ENCODE measurements at regions of chr7 and their contacts with region 1.

Region 1: DNA sequence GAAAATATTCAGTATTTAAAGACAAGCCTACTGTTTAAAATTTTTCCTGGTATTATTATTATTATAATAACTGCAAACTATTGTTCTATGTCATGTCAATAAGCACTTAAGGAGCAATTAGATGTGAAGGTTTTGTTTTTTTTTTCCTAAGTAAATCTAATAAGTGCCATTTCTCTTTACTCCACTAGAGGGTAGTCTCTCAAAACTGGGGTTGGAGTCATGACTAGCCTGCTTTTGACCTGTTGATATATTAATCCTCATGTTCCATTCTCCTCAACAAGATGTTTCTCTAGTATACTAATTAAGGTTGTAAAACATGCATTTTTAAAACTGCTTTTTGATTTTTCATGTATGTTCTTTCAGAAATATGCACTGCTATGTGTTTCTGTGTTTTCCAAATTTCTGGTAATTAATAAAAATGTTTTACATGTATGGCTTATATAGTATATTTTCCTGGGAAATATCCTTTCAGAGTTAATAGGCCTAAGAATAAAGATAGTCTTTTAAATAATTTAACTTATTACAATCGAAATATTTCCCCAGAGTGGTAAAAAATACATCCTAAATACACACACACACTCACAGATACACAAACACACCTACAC is 1.0 kb upstream of the LRRN3 start:
- DNase-seq: no peak
- H3K4me3 Mint-ChIP-seq: peak overlapping the region; percentile 93
- H3K27ac Mint-ChIP-seq: no peak overlapping the region
- H3K4me1 Mint-ChIP-seq: peaks cover 85% of the 10 kb centered on the region
- H3K27me3 Mint-ChIP-seq: no peaks in the 10 kb centered on the region

Region 2: GRCh38 chr7:110432061-110432553 is 657.8 kb before region 1 on chr7:
- intact Hi-C with region 1: no loop called
- DNase-seq: no peak
- H3K4me3 Mint-ChIP-seq: no peak overlapping the region
- H3K27ac Mint-ChIP-seq: no peak overlapping the region
- H3K4me1 Mint-ChIP-seq: no peaks in the 10 kb centered on the region
- H3K27me3 Mint-ChIP-seq: peaks cover 2% of the 10 kb centered on the region

Region 3: GRCh38 chr7:110801502-110801901 is 288.4 kb before region 1 on chr7:
- intact Hi-C with region 1: loop called (anchors 5 kb)
- DNase-seq: no peak
- H3K4me3 Mint-ChIP-seq: no peak overlapping the region
- H3K27ac Mint-ChIP-seq: no peak overlapping the region
- H3K4me1 Mint-ChIP-seq: peaks cover 10% of the 10 kb centered on the region
- H3K27me3 Mint-ChIP-seq: peaks cover 3% of the 10 kb centered on the region

Region 4: DNA sequence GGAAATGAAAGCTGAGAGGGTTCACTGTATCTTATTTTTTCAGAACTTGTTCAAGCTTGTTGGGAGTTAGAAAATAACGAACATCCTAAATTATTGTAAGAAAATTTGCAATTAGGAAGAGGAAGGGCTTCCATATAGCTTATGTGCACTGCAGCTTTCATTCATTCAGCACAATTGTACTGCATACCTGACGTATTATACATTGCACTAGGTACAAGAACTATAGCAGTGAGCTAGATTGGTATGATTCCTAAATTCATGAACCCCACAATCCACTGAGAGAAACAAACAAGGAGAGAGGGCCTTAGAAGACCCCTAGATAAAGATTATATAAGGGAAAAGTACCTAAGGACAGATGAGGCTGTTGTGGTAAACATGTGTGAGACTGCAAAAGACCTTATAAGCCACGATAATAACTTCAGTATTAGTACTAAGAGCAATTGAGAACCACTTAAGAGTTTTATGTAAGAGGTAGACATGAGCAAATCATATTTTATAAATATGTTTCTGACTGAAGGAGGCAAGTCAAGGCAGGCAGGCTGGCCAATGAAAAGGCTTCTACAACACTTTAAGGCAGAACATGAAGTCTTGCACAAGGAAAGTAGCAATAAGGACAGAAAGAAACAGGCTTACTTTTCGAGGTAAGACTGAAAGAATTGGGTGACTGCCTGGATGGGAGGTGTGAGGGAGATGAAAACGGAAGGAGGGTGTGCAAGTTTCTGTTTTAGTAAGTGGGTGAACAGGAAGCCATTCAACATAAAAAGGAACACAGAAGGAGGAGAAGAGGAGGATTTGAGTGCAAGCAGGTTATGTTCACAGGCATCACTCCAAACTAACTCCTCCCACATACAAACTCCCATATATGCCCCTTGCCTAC is 76.9 kb before region 1 on chr7:
- intact Hi-C with region 1: loop called (anchors 1 kb)
- DNase-seq: peak; percentile 53
- H3K4me3 Mint-ChIP-seq: peak overlapping the region; percentile 80
- H3K27ac Mint-ChIP-seq: peak overlapping the region; percentile 86
- H3K4me1 Mint-ChIP-seq: peaks cover 72% of the 10 kb centered on the region
- H3K27me3 Mint-ChIP-seq: no peaks in the 10 kb centered on the region

Region 5: GRCh38 chr7:111138196-111138569 is 48.3 kb after region 1 on chr7:
- intact Hi-C with region 1: loop called (anchors 1 kb)
- DNase-seq: peak; percentile 61
- H3K4me3 Mint-ChIP-seq: peak overlapping the region; percentile 53
- H3K27ac Mint-ChIP-seq: peak overlapping the region; percentile 96
- H3K4me1 Mint-ChIP-seq: peaks cover 35% of the 10 kb centered on the region
- H3K27me3 Mint-ChIP-seq: peaks cover 4% of the 10 kb centered on the region

Region 6: GRCh38 chr7:111486472-111487142 is 396.7 kb after region 1 on chr7:
- intact Hi-C with region 1: loop called (anchors 1 kb)
- DNase-seq: no peak
- H3K4me3 Mint-ChIP-seq: no peak overlapping the region
- H3K27ac Mint-ChIP-seq: no peak overlapping the region
- H3K4me1 Mint-ChIP-seq: no peaks in the 10 kb centered on the region
- H3K27me3 Mint-ChIP-seq: no peaks in the 10 kb centered on the region

Region 7: GRCh38 chr7:111682588-111683340 is 592.8 kb after region 1 on chr7:
- intact Hi-C with region 1: no loop called
- DNase-seq: no peak
- H3K4me3 Mint-ChIP-seq: no peak overlapping the region
- H3K27ac Mint-ChIP-seq: no peak overlapping the region
- H3K4me1 Mint-ChIP-seq: no peaks in the 10 kb centered on the region
- H3K27me3 Mint-ChIP-seq: no peaks in the 10 kb centered on the region

Region 8: DNA sequence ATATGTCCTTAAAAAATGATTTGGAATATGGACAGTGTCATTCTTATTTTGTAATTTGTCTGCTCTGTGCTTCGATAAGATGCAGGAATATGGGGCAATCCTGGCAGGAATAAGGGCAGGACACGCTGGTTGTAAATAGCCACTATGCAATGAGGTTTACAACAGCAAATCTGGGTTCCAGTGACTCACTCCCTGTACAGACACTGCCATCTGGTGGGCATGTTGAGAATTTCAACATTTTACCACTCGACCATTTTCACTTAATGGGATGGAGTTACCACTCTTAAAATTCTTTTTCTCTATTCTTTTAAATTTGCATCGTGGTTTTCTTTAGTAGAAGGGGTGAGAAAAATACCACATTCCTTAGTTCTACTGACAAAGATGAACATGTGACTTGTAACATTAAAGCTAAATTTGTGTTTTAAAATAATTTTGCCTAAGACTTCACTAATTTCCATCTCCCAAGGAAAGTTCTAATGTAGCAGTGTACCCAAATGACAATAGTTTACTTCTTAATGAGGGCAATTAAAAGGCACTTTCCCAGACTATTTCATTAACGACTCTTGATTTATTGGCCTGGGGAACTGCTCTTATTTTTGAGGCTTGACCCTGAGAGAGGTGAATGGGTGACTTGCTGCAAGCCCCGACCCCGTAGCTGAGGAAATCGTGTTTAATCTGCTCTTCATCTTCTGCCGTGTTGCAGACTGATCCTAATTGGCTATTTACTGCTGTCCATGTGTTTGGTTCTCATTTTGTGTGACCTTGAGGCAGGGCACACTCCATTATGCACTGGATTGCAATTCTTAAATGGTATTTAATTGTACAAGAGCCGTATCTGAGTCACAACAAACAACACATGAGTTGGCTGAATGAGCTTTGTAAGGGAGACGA is 646.0 kb after region 1 on chr7:
- intact Hi-C with region 1: loop called (anchors 5 kb)
- DNase-seq: peak; percentile 29
- H3K4me3 Mint-ChIP-seq: no peak overlapping the region
- H3K27ac Mint-ChIP-seq: no peak overlapping the region
- H3K4me1 Mint-ChIP-seq: no peaks in the 10 kb centered on the region
- H3K27me3 Mint-ChIP-seq: no peaks in the 10 kb centered on the region

Measured in activated T-helper 1 cell treated with anti-CD3 and anti-CD28 coated beads, Interleukin-12 subunit alpha, Interleukin-12 subunit beta, Interleukin-2, Interleukin-4 antibody, amounts not matched to agents 30 ng/mL and 10 ng/mL and 1 ng/mL, durations not matched to agents 14 hours and 24 hours and 36 hours (primary cell).